Left colon (tissue), 2 donors: ENCODE measurements at regions of chr2 and their contacts with region 1.

Region 1: GRCh38 chr2:174771631-174772471 is 7.6 kb upstream of the CHRNA1 start:
- DNase-seq: peak; percentile 53 to 78
- ATAC-seq: peak; percentile 85

Region 2: GRCh38 chr2:174992886-174993285 is 221.0 kb after region 1 on chr2:
- intact Hi-C with region 1: loop called in 1 of 2 experiments (anchors 5 kb)
- DNase-seq: no peak
- ATAC-seq: no peak